CD8-positive, alpha-beta T cell (primary cell): ENCODE measurements at regions of chr20 and their contacts with region 1.

Region 1: GRCh38 chr20:35901678-35902544 is 52.4 kb downstream of the SCAND1 start:
- DNase-seq: no peak
- ATAC-seq: no peak
- H3K4me3 ChIP-seq: no peak overlapping the region
- H3K4me3 Mint-ChIP-seq: no peak overlapping the region
- H3K27ac ChIP-seq: no peak overlapping the region
- H3K27ac Mint-ChIP-seq: no peak overlapping the region
- H3K4me1 ChIP-seq: no peaks in the 10 kb centered on the region
- H3K4me1 Mint-ChIP-seq: peaks cover 15% of the 10 kb centered on the region
- H3K27me3 ChIP-seq: no peaks in the 10 kb centered on the region
- H3K27me3 Mint-ChIP-seq: no peaks in the 10 kb centered on the region
- CTCF ChIP-seq: no peak

Region 2: GRCh38 chr20:34343458-34344211 is 1558.3 kb before region 1 on chr20:
- CTCF ChIA-PET with region 1: no interaction called
- POLR2A ChIA-PET with region 1: no interaction called
- intact Hi-C with region 1: no loop called
- DNase-seq: no peak
- ATAC-seq: no peak
- H3K4me3 ChIP-seq: no peak overlapping the region
- H3K4me3 Mint-ChIP-seq: no peak overlapping the region
- H3K27ac ChIP-seq: no peak overlapping the region
- H3K27ac Mint-ChIP-seq: no peak overlapping the region
- H3K4me1 ChIP-seq: no peaks in the 10 kb centered on the region
- H3K4me1 Mint-ChIP-seq: no peaks in the 10 kb centered on the region
- H3K27me3 ChIP-seq: no peaks in the 10 kb centered on the region
- H3K27me3 Mint-ChIP-seq: no peaks in the 10 kb centered on the region
- CTCF ChIP-seq: no peak

Region 3: GRCh38 chr20:35845561-35845960 is 56.4 kb before region 1 on chr20:
- CTCF ChIA-PET with region 1: no interaction called
- POLR2A ChIA-PET with region 1: no interaction called
- intact Hi-C with region 1: loop called in 1 of 2 experiments (anchors 2 kb)
- DNase-seq: no peak
- ATAC-seq: no peak
- H3K4me3 ChIP-seq: no peak overlapping the region
- H3K4me3 Mint-ChIP-seq: no peak overlapping the region
- H3K27ac ChIP-seq: no peak overlapping the region
- H3K27ac Mint-ChIP-seq: no peak overlapping the region
- H3K4me1 ChIP-seq: peaks cover 6% of the 10 kb centered on the region
- H3K4me1 Mint-ChIP-seq: peaks cover 33% of the 10 kb centered on the region
- H3K27me3 ChIP-seq: no peaks in the 10 kb centered on the region
- H3K27me3 Mint-ChIP-seq: no peaks in the 10 kb centered on the region
- CTCF ChIP-seq: no peak